Aorta (tissue), 5 donors: ENCODE measurements at regions of chr17 and their contacts with region 1.

Region 1: DNA sequence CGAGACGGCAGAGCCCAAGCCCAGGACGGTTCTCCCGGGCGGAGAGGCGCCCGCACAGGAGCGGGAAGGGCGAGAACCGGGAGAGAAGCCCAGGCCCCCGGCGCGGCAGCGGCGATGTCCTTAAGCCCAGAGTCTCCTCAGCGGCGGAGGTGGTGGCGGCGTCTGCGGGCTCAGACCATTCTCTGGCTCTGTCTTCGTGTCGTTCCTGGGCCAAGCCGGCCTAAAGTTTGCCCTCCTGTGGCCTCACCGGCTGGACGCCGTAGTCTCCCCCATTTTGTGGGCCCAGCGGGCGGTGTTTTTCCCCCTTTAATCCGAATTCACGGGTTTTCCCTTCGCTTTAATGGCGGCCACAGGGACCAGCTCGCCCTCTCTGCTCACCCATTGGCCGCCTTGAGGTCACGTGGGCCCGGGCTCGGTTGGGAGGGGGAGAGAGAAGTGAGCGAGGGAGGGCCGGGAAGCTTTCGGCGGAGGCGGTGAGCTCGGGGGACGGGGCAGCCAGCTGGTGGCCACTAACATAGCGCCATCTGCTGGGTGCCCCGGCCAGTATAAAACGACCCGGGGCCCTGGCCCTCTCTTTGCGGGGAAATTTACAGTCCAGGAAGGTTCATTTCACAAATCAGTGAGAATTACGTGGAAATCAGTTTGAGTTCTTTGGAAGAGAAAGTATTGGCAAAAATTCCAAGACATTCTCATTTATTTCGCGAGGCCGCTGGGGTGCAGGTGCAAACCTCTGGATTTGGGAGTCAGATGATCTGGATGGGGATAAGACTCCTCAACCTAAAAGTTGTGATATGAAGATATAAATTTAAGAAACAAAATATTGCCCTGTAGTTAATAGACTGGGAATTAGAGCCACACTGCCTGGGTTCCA is 755 bp upstream of the MED13 start:
- DNase-seq: peak; percentile 99 to 100
- ATAC-seq: peak; percentile 100
- H3K4me3 ChIP-seq: peak overlapping the region; percentile 97
- H3K27ac ChIP-seq: peak overlapping the region; percentile 92 to 94
- H3K4me1 ChIP-seq: no peaks in the 10 kb centered on the region
- H3K27me3 ChIP-seq: no peaks in the 10 kb centered on the region

Region 2: DNA sequence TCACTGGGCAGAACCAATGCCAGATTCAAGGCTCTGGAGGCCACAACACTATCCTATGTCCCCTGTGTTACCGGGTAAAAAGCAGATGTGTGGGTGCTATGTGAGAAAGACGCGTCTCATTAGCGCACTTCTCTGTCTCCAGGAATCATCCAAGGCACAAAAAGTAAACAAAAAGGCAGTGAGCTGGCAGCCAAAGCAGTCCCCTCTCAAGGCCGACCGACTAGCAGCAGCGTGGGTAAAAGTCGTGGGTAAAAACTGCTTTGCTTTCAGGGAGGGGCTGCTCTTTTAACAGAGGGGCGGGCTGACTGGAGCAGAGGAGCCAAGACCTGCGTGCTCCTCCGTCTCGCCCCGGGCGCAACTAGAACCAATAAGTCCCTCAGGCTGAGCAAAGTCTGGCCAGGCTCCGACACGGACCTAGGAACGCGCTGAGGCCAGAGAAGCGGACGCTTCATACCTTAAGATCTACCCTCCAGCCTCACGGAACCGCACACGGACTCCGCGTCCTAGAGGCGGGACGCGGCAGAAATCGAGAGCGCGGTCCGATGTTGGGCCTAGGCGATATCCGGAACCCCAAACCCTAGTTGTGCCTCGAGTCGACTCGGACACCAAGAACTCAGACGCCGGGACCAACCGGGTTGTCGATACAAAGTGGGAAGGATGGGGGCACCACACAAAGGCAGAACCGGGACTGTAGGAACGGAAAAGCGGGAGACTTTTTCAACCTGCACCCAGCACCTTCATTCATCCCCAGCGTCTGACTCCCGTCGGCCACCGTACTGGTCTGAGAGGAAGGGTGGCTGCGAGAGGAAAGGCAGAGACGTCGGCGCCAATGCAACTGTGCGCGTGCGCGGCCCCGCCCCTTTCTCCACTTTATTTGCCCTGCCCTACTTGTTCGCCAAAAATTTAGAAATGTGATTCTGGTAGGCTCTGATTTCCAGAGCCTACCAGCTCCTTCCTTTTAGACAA is 138.3 kb before region 1 on chr17 and contains the start of gene INTS2:
- intact Hi-C with region 1: loop called (anchors 10 kb)
- DNase-seq: peak; percentile 98 to 99
- ATAC-seq: peak; percentile 99
- H3K4me3 ChIP-seq: peak within 1 kb of the TSS; percentile 60 to 67
- H3K27ac ChIP-seq: peak within 1 kb of the TSS; percentile 85 to 95
- H3K4me1 ChIP-seq: no peaks in the 10 kb centered on the region
- H3K27me3 ChIP-seq: no peaks in the 10 kb centered on the region
- total RNA-seq, gene INTS2: 11.9 to 14.5 TPM

Region 3: GRCh38 chr17:61955621-61956020 is 110.2 kb before region 1 on chr17:
- intact Hi-C with region 1: no loop called
- DNase-seq: no peak
- ATAC-seq: no peak
- H3K4me3 ChIP-seq: no peak overlapping the region
- H3K27ac ChIP-seq: no peak overlapping the region
- H3K4me1 ChIP-seq: no peaks in the 10 kb centered on the region
- H3K27me3 ChIP-seq: no peaks in the 10 kb centered on the region

Region 4: GRCh38 chr17:62017610-62018261 is 48.1 kb before region 1 on chr17:
- intact Hi-C with region 1: no loop called
- DNase-seq: no peak
- ATAC-seq: no peak
- H3K4me3 ChIP-seq: no peak overlapping the region
- H3K27ac ChIP-seq: no peak overlapping the region
- H3K4me1 ChIP-seq: no peaks in the 10 kb centered on the region
- H3K27me3 ChIP-seq: no peaks in the 10 kb centered on the region